Head of caudate nucleus (tissue), 42 donors: ENCODE measurements at regions of chr4 and their contacts with region 1.

Region 1: GRCh38 chr4:48779998-48780742 is at the start of gene FRYL:
- DNase-seq: peak; percentile 99 to 100 (median 100)

Region 2: GRCh38 chr4:48578132-48578968 is 201.8 kb before region 1 on chr4:
- intact Hi-C with region 1: loop called (anchors 2 kb)
- DNase-seq: peak in 37 of 42 donors; percentile 33 to 91 (median 71)

Region 3: GRCh38 chr4:48653217-48654014 is 126.8 kb before region 1 on chr4:
- intact Hi-C with region 1: loop called (anchors 10 kb)
- DNase-seq: peak; percentile 28 to 90 (median 75)

Region 4: DNA sequence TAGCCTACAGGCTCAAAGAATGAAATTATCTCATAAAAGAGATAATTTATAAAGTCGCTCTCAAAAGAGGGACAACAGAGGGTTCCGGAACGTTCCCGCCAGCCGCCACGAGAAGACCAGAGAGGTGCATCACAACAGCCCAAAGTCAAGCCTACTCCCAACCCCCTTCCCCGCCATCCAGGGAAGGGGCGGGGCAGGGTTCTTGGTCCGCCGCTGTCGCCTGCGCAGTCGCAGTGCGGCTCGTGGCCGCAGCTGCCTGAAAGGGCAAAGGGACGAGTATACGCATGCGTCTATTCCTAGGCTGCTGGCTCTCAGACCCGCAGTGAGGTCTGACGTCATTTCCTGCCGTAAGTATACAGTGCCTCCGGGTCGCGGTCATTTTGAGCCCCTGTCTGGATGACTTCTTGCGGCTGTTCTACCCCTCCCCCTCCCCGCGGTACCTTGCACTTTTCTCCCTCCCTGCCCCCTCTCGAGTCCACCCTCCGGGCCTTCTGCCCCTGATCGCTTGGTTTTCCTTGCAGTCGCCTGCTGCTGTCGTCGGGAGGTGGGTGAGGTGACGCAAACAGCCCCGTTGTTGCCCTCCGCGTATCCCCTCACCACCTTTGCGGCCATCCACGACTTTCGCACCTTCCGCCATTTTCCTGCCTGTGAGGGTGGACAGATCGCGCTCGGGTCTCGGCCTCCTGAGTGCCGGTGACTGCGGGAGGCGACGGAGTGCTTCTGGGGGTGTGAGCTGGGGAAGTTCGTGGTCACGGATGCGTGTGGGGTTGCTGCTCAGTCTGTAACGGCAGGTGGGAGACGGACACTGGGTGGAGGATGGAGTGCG is 50.7 kb after region 1 on chr4 and contains the start of gene OCIAD1:
- intact Hi-C with region 1: loop called (anchors 5 kb)
- DNase-seq: peak; percentile 91 to 99 (median 98)